ENCODE measurements at regions of chr15 and their contacts with region 1.

Region 1: DNA sequence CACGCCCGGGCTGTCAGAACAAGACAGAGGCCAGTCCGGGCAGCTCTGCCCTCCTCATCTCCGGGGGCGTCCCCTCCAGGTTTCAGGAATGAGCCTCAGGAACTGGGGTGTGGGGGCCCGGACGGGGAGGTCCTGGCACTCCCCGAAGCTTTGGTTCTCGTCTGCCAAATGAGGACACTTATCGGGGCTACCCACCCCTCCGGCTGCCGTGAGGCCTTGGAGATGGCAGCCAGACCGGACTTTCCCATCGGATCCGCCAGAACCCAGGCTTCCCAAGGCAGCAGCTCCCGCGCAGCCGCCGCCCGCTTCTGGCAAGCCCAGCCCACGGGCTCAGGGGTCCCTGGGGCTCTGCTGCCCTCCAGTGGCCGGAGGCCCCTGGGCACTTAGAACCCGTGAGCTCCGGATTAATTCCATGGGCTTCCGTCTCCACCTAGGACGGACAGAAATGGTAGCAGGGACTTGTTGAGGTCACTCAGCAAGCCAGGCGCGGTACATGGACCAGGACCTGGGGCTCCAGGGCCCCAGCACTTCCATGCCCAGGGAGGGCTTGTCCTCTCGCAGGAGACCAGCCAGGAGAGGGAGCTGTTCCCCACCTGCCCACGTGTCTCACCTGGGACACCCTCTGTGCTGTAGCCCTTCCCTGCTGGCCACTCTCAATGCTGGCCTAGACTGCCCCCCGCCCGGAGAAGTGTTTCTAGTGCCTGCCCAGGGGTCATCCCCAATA is 89.4 kb downstream of the LINGO1 start:
- DNase-seq: peak; percentile 94
- H3K4me3 Mint-ChIP-seq: peak overlapping the region; percentile 65
- H3K27ac Mint-ChIP-seq: peak overlapping the region; percentile 34
- H3K4me1 Mint-ChIP-seq: peaks cover 46% of the 10 kb centered on the region
- H3K27me3 Mint-ChIP-seq: peaks cover 2% of the 10 kb centered on the region
- CTCF ChIP-seq: peak; percentile 93

Region 2: GRCh38 chr15:77107531-77108355 is 435.6 kb before region 1 on chr15:
- CTCF ChIA-PET with region 1: interaction called, 13 read pairs
- intact Hi-C with region 1: no loop called
- DNase-seq: peak; percentile 75
- H3K4me3 Mint-ChIP-seq: no peak overlapping the region
- H3K27ac Mint-ChIP-seq: no peak overlapping the region
- H3K4me1 Mint-ChIP-seq: peaks cover 10% of the 10 kb centered on the region
- H3K27me3 Mint-ChIP-seq: no peaks in the 10 kb centered on the region
- CTCF ChIP-seq: peak; percentile 69

Region 3: DNA sequence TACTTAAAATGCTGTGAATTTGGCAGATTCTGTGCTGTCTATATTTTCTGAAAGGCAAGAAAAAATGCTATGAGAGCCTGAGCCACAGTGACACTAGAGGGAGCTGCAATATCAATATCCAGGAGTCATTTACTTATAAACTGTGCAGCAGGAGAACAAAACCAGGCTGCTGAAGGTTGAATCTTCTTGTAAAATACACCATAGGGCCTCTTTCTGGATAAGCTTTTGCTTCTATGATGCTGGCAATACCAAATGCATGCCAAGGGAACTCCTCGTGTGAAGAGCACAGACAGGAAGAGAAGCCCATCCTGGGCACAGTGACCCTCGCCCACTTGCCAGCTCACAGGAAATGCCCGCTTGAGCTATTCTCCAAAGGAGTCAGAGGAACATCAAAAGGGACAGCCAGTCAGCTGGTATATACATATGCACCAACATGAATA is 424.4 kb before region 1 on chr15:
- CTCF ChIA-PET with region 1: interaction called, 20 read pairs
- intact Hi-C with region 1: loop called (anchors 2 kb)
- DNase-seq: peak; percentile 51
- H3K4me3 Mint-ChIP-seq: no peak overlapping the region
- H3K27ac Mint-ChIP-seq: no peak overlapping the region
- H3K4me1 Mint-ChIP-seq: peaks cover 19% of the 10 kb centered on the region
- H3K27me3 Mint-ChIP-seq: no peaks in the 10 kb centered on the region
- CTCF ChIP-seq: peak; percentile 71

Region 4: DNA sequence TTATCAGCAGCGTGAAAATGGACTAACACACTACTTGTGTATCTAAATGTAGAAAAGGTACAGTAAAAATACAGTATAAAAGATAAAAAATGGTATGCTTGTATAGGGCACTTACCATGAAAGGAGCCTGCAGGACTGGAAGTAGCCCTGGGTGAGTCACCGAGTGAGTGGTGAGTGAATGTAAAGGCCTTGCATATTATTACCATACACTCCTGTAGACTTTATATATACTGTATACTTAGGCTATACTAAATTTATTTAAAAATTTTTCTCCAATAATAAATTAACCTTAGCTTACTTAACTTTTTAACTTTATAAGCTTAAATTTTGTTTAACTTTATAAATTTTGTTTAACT is 405.2 kb before region 1 on chr15:
- CTCF ChIA-PET with region 1: no interaction called
- intact Hi-C with region 1: no loop called
- DNase-seq: no peak
- H3K4me3 Mint-ChIP-seq: no peak overlapping the region
- H3K27ac Mint-ChIP-seq: no peak overlapping the region
- H3K4me1 Mint-ChIP-seq: peaks cover 13% of the 10 kb centered on the region
- H3K27me3 Mint-ChIP-seq: no peaks in the 10 kb centered on the region
- CTCF ChIP-seq: no peak

Region 5: DNA sequence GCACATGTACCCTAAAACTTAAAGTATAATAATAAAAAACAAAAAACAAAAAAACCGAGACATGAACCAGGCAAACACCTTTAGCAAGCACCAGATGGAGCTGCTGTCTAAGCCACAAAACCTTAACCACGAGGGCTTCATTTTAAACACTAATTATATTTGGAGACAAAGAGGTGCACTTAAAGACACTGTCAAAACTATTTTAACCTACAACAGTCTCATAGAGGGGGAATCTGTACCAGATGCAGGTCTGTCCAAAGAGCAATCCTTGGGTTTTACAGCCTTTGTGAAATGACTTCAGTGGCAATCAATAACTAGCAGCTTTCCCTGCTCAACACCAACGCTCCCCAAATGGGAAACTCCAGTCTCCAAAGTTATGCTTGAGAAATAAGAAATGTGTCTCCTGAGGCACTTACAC is 356.7 kb before region 1 on chr15:
- CTCF ChIA-PET with region 1: interaction called, 46 read pairs
- intact Hi-C with region 1: loop called (anchors 1 kb)
- DNase-seq: peak; percentile 18
- H3K4me3 Mint-ChIP-seq: no peak overlapping the region
- H3K27ac Mint-ChIP-seq: no peak overlapping the region
- H3K4me1 Mint-ChIP-seq: peaks cover 39% of the 10 kb centered on the region
- H3K27me3 Mint-ChIP-seq: no peaks in the 10 kb centered on the region
- CTCF ChIP-seq: no peak

Region 6: GRCh38 chr15:77419836-77420609 is 123.3 kb before region 1 on chr15 and contains the start of gene PEAK1:
- CTCF ChIA-PET with region 1: interaction called, 8 read pairs
- intact Hi-C with region 1: loop called (anchors 5 kb)
- DNase-seq: peak; percentile 100
- H3K4me3 Mint-ChIP-seq: peak within 1 kb of the TSS; percentile 85
- H3K27ac Mint-ChIP-seq: peak within 1 kb of the TSS; percentile 95
- H3K4me1 Mint-ChIP-seq: peaks cover 27% of the 10 kb centered on the region
- H3K27me3 Mint-ChIP-seq: no peaks in the 10 kb centered on the region
- CTCF ChIP-seq: no peak
- total RNA-seq, gene PEAK1: 51.7 and 54.3 TPM in 2 replicates

Region 7: GRCh38 chr15:77496710-77497103 is 46.6 kb before region 1 on chr15:
- CTCF ChIA-PET with region 1: interaction called, 38 read pairs
- intact Hi-C with region 1: no loop called
- DNase-seq: peak; percentile 89
- H3K4me3 Mint-ChIP-seq: no peak overlapping the region
- H3K27ac Mint-ChIP-seq: no peak overlapping the region
- H3K4me1 Mint-ChIP-seq: peaks cover 36% of the 10 kb centered on the region
- H3K27me3 Mint-ChIP-seq: no peaks in the 10 kb centered on the region
- CTCF ChIP-seq: peak; percentile 88

Region 8: GRCh38 chr15:77507911-77508310 is 35.4 kb before region 1 on chr15:
- CTCF ChIA-PET with region 1: interaction called, 60 read pairs
- intact Hi-C with region 1: loop called (anchors 2 kb)
- DNase-seq: peak; percentile 81
- H3K4me3 Mint-ChIP-seq: peak overlapping the region; percentile 61
- H3K27ac Mint-ChIP-seq: peak overlapping the region; percentile 99
- H3K4me1 Mint-ChIP-seq: peaks cover 56% of the 10 kb centered on the region
- H3K27me3 Mint-ChIP-seq: no peaks in the 10 kb centered on the region
- CTCF ChIP-seq: no peak